Dorsolateral prefrontal cortex (tissue), 120 donors: ENCODE measurements at regions of chr14 and their contacts with region 1.

Region 1: GRCh38 chr14:52068615-52069303 is at the start of gene NID2:
- DNase-seq: peak; percentile 26 to 77 (median 66)
- H3K4me3 ChIP-seq: peak within 1 kb of the TSS; percentile 49 to 94 (median 72)
- H3K27ac ChIP-seq: peak within 1 kb of the TSS in 48 of 59 donors; percentile 4 to 87 (median 56)
- H3K27me3 ChIP-seq: peaks cover 0 to 18% (median 4%) of the 10 kb centered on the region in 45 donors
- CTCF ChIP-seq: peak in 9 of 56 donors; percentile 4 to 19 (median 9)
- total RNA-seq, gene NID2: 1.7 to 12.5 (median 4.5) TPM

Region 2: DNA sequence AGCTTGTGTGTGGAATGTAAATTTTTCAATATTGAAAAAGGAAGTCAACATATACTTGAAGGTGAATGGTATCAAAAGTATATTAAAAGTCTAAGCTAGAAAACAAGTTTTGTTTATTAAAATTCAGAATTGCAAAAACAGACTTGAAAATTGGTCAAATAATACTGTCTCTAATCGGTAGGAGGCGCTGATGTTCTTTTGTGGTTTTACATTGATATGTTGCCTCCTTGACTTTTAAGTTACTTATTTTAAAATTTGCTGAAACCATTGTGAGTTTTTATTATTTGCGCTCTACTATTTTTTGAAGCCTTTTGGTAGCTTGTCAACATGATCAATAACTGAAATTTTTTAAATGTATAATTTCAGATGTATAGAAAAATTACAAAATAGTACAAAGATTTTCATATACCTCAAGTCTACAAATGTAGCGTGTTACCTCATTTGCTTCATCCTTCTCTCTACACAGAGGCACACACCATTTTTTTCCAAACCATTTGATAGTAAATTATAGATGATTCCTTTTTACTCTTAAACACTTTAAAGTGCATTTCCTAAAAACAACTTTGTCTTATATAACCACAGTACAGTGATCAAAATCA is 72.5 kb before region 1 on chr14:
- intact Hi-C with region 1: loop called in 1 of 2 experiments (anchors 5 kb)
- DNase-seq: no peak
- H3K4me3 ChIP-seq: no peak overlapping the region
- H3K27ac ChIP-seq: peak overlapping the region in 12 of 59 donors; percentile 2 to 51 (median 17)
- H3K27me3 ChIP-seq: no peaks in the 10 kb centered on the region
- CTCF ChIP-seq: peak; percentile 53 to 90 (median 74)

Region 3: GRCh38 chr14:52117111-52117832 is 48.5 kb after region 1 on chr14:
- intact Hi-C with region 1: loop called in 1 of 2 experiments (anchors 5 kb)
- DNase-seq: no peak
- H3K4me3 ChIP-seq: no peak overlapping the region
- H3K27ac ChIP-seq: peak overlapping the region in 38 of 59 donors; percentile 8 to 93 (median 67)
- H3K27me3 ChIP-seq: no peaks in the 10 kb centered on the region
- CTCF ChIP-seq: no peak